Activated CD8-positive, alpha-beta T cell treated with anti-CD3 and anti-CD28 coated beads, Interleukin-2, amount 10 ng/mL, durations not matched to agents 7 days and 5 days (primary cell): ENCODE measurements at regions of chr16 and their contacts with region 1.

Region 1: GRCh38 chr16:75519881-75520280 is 16.0 kb downstream of the CHST5 start:
- DNase-seq: no peak
- ATAC-seq: no peak
- H3K4me3 Mint-ChIP-seq: no peak overlapping the region
- H3K27ac Mint-ChIP-seq: no peak overlapping the region
- H3K4me1 Mint-ChIP-seq: peaks cover 13% of the 10 kb centered on the region
- H3K27me3 Mint-ChIP-seq: no peaks in the 10 kb centered on the region

Region 2: GRCh38 chr16:75464130-75464918 is 55.6 kb before region 1 on chr16 and contains the start of gene TMEM170A:
- CTCF ChIA-PET with region 1: interaction called, 12 read pairs
- POLR2A ChIA-PET with region 1: interaction called, 7 read pairs
- DNase-seq: peak; percentile 99
- ATAC-seq: peak; percentile 97
- H3K4me3 Mint-ChIP-seq: peak within 1 kb of the TSS; percentile 96
- H3K27ac Mint-ChIP-seq: peak within 1 kb of the TSS; percentile 93
- H3K4me1 Mint-ChIP-seq: peaks cover 42% of the 10 kb centered on the region
- H3K27me3 Mint-ChIP-seq: no peaks in the 10 kb centered on the region
- total RNA-seq, gene TMEM170A: 30.2 to 31.1 TPM

Region 3: DNA sequence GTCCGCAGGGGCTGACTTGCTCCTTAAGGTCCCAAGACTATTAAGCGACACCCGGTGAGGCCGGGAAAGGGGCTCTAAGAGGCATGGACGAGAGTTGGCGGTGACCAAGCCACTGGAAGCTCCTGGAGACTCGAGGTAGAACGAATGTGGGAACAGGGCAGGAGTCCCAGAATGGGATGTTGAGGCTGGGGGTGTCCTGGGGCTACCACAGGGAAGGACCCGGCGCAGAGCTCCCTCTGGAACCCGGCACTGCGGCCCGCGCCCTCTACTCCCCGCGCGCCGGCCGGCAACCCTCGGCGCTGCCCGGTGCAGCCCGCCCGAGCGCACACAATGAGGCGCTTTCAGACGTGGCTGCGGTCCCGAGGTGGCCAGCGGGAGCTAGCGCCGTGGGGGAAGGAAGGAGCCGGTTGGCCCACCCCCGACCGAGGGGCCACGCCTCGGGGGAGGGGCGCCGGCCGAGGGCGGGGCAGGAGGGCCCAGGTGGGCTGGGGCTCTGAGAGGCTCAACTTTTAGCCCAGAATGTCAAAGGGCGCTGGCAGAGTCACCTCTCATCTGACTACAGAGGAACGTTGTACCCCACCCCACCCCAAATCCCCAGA is 24.7 kb before region 1 on chr16 and contains the start of gene CHST6:
- CTCF ChIA-PET with region 1: interaction called, 14 read pairs
- POLR2A ChIA-PET with region 1: no interaction called
- DNase-seq: peak; percentile 37
- ATAC-seq: peak; percentile 87
- H3K4me3 Mint-ChIP-seq: peak within 1 kb of the TSS; percentile 36
- H3K27ac Mint-ChIP-seq: no peak within 1 kb of the TSS
- H3K4me1 Mint-ChIP-seq: peaks cover 7% of the 10 kb centered on the region
- H3K27me3 Mint-ChIP-seq: peaks cover 21% of the 10 kb centered on the region
- total RNA-seq, gene CHST6: not detected

Region 4: DNA sequence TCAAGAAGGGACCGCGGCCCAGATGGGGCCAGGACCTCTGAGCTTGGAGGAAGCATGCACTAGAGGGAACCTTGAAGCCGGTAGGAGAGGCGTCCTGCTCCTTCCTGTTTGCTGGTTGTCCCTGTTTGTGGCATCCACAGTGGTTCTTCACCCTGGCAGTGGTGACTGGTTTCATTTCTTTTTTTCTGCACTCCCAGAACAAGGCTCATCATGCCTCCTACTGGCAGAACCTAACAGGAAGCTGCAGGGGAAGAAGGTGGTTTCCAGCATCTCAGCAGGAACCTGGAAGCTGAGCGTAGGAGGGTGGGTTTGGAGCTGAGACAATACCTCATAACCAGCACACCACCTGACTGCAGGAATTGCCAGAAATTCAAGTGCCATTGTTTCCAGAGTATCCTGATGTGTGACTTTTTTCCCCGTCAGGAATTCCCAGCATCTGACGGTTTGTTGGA is 30.4 kb after region 1 on chr16:
- CTCF ChIA-PET with region 1: interaction called, 13 read pairs
- POLR2A ChIA-PET with region 1: no interaction called
- DNase-seq: peak; percentile 48
- ATAC-seq: peak; percentile 76
- H3K4me3 Mint-ChIP-seq: no peak overlapping the region
- H3K27ac Mint-ChIP-seq: no peak overlapping the region
- H3K4me1 Mint-ChIP-seq: peaks cover 11% of the 10 kb centered on the region
- H3K27me3 Mint-ChIP-seq: peaks cover 9% of the 10 kb centered on the region

Region 5: GRCh38 chr16:75647492-75648264 is 127.8 kb after region 1 on chr16 and contains the starts of genes KARS1 and TERF2IP:
- CTCF ChIA-PET with region 1: interaction called, 17 read pairs
- POLR2A ChIA-PET with region 1: interaction called, 5 read pairs
- DNase-seq: peak; percentile 96
- ATAC-seq: peak; percentile 93
- H3K4me3 Mint-ChIP-seq: peak within 1 kb of the TSS; percentile 98
- H3K27ac Mint-ChIP-seq: peak within 1 kb of the TSS; percentile 97
- H3K4me1 Mint-ChIP-seq: peaks cover 61% of the 10 kb centered on the region
- H3K27me3 Mint-ChIP-seq: no peaks in the 10 kb centered on the region
- total RNA-seq, gene KARS1: 208 TPM
- total RNA-seq, gene TERF2IP: 61.4 to 63.2 TPM